IMR-90 (cell line): ENCODE measurements at regions of chr7 and their contacts with region 1.

Region 1: GRCh38 chr7:129122078-129122750 is 22.3 kb upstream of the TSPAN33 start:
- DNase-seq: no peak
- ATAC-seq: no peak
- H3K4me3 ChIP-seq: no peak overlapping the region
- H3K27ac ChIP-seq: no peak overlapping the region
- H3K4me1 ChIP-seq: no peaks in the 10 kb centered on the region
- H3K27me3 ChIP-seq: peaks cover 32% of the 10 kb centered on the region
- CTCF ChIP-seq: no peak
- POLR2A ChIP-seq: no peak
- RAD21 ChIP-seq: no peak

Region 2: DNA sequence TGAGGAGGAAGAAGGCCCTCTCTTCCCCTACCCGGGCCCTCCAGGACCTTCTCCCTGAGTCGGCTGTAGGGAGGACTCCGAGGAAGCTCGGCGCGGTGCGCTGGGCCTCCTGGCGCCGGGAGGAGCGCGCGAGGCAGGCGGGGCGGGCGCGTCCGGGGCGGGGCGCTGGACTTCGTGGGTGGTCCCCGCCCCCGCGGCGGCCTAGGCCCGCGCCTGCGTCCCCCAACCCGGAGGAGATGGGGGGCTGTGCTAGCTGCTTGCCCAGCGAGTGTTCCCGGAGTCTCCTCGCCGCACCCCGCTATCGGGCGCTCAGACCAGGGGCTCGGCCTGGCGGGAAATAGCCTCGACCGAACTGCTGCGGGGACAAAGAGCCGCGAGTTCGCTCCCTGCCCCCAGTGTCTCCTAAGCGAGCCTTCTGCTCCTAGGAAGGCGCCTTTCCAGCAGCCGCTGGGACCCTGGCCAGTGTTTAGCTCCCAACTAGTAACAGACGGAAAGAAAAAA is 47.0 kb after region 1 on chr7:
- CTCF ChIA-PET with region 1: no interaction called
- POLR2A ChIA-PET with region 1: interaction called, 11 read pairs
- dilution Hi-C with region 1: no loop called
- in situ Hi-C with region 1: no loop called
- intact Hi-C with region 1: no loop called
- DNase-seq: no peak
- ATAC-seq: peak; percentile 91
- H3K4me3 ChIP-seq: peak overlapping the region; percentile 45
- H3K27ac ChIP-seq: no peak overlapping the region; the same call in 1 of the 2 replicates
- H3K4me1 ChIP-seq: no peaks in the 10 kb centered on the region; the same call in 1 of the 2 replicates
- H3K27me3 ChIP-seq: peaks cover 42% of the 10 kb centered on the region
- CTCF ChIP-seq: no peak
- POLR2A ChIP-seq: no peak
- RAD21 ChIP-seq: no peak

Region 3: DNA sequence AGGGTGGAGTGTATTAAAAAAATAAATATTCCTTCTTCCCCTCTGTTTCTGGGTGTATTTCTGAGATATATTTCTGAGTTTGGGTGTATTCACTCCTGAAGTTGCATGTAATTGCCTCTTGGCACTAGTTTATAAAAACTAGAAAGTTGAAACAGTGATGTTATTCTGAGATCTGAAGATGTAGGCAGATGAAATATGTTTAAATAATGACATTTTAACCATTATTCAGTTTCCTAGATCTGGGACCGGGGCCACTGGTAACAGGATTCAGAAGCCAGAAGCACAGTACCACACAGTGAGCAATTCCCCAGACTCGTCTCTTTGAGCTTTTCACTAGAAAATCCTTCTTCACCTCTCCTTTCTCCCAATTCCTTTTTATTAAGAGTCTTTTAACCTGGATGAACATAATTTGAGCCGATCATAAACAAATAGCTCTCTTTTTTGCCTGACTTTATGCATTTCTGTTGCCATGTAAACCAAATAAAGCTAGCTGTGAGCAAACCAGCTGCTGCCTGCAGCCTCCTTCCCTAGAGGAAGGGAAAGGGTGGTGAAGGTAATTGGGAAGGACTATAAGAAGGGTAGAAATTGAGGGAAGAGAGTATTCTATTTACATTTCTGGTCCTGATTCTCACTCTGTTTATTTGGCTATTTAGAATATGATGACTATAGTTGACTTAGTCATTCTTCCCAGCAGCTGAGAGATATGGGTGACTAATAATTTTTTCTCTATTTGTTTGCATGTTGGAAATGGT is 210.2 kb after region 1 on chr7:
- CTCF ChIA-PET with region 1: no interaction called
- POLR2A ChIA-PET with region 1: no interaction called
- dilution Hi-C with region 1: no loop called
- in situ Hi-C with region 1: no loop called
- intact Hi-C with region 1: no loop called
- DNase-seq: peak; percentile 93
- ATAC-seq: peak; percentile 95
- H3K4me3 ChIP-seq: no peak overlapping the region
- H3K27ac ChIP-seq: peak overlapping the region; percentile 66; the same call in 1 of the 2 replicates
- H3K4me1 ChIP-seq: peaks cover 3% of the 10 kb centered on the region; the same call in 1 of the 2 replicates
- H3K27me3 ChIP-seq: no peaks in the 10 kb centered on the region
- CTCF ChIP-seq: no peak
- POLR2A ChIP-seq: peak; percentile 52; the same call in 1 of the 2 replicates
- RAD21 ChIP-seq: no peak